ENCODE measurements at regions of chr4 and their contacts with region 1.

Region 1: DNA sequence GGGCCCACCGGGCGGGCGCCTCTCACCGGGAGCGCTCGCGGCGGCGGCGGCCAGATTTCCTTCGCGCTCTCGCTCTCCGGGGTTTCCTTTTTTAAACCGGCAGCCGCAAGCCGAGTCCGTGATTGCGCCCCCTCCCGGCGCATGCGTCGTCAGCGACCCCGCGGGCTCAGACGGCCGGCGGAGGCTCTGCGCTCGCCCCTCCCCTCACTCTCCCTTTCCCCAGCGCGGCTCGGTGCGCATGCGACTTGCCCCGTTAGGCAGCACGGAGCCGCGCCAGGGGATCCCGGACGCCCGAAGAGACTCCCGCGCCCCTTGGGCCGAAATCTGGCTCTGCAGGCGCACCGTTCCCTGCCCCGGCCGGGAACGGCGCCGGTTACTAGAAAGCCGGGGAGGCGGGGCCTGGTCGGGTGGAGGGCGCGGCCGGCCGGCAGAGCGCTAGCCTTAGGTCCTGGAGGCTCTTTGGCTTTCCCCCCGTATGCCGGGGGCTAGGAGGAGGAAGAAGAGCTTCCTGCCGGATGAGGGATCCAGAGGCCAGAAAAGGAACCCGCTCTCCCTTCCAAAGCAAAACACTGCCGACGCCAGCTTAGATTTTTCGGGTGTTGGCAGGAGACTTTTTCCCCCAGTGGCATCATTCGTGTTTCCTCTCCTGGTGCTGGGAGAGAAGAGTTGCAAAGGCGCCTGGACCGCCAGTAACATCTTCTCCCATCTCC is at the start of gene CLOCK:
- DNase-seq: peak; percentile 89 to 91 (median 90)
- ATAC-seq: peak; percentile 81
- H3K4me3 ChIP-seq: peak within 1 kb of the TSS; percentile 50
- H3K27ac ChIP-seq: peak within 1 kb of the TSS; percentile 91
- H3K4me1 ChIP-seq: peaks cover 9 to 27% of the 10 kb centered on the region in 2 experiments; a peak in 4 of 5 replicates
- H3K27me3 ChIP-seq: no peaks in the 10 kb centered on the region
- CTCF ChIP-seq: peak; percentile 52 to 65 (median 54); a peak in 5 of 6 replicates
- EP300 ChIP-seq: no peak
- POLR2A ChIP-seq: peak; percentile 72
- RAD21 ChIP-seq: no peak; a peak in 2 of 4 replicates
- polyA plus RNA-seq, gene CLOCK: 3.7 to 4.5 TPM

Region 2: GRCh38 chr4:55184600-55185523 is 362.0 kb before region 1 on chr4:
- CTCF ChIA-PET with region 1: no interaction called
- POLR2A ChIA-PET with region 1: no interaction called
- in situ Hi-C with region 1: no loop called
- intact Hi-C with region 1: loop called (anchors 10 kb)
- DNase-seq: peak; percentile 31 to 62 (median 38)
- ATAC-seq: peak; percentile 93
- H3K4me3 ChIP-seq: no peak overlapping the region
- H3K27ac ChIP-seq: no peak overlapping the region
- H3K4me1 ChIP-seq: no peaks in the 10 kb centered on the region
- H3K27me3 ChIP-seq: no peaks in the 10 kb centered on the region; a peak in 1 of 5 replicates
- CTCF ChIP-seq: peak; percentile 57 to 77 (median 66)
- EP300 ChIP-seq: no peak
- POLR2A ChIP-seq: no peak
- RAD21 ChIP-seq: peak; percentile 61

Region 3: DNA sequence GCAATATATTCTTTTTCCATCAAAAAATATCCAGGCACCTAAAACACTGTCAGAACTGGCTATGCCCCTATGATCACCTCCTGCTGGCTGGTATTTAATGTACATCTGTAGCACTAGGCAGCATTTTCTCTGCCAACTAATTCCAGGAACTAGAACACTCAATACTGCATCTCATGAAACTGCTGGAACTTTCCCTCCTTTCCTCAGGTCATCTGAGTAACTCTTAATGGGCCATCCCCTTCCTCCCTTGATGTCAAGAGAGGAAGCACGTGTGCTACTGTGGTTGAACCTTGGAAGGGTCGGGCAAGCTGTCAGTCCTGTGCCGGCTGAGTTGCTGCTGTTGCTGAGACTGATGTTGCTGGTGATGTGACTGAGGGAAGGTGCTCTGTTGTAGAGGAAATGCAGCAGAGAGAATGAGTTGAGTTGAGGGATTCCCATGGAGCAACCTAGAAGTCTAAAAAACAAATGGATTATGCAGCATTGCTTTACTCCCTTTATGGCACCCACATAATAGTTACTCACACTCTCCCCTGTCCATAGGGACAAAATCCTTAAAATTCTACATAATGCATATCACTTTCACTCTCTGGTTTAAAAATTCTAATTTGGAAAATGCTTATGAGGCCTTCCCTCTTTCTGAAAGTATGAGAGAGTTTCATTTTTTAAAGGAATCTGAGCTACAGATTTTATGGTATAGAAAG is 111.6 kb before region 1 on chr4:
- CTCF ChIA-PET with region 1: no interaction called
- POLR2A ChIA-PET with region 1: no interaction called
- in situ Hi-C with region 1: no loop called
- intact Hi-C with region 1: loop called (anchors 5 kb)
- DNase-seq: peak in 1 of 4 experiments; percentile 13
- ATAC-seq: peak; percentile 41
- H3K4me3 ChIP-seq: no peak overlapping the region
- H3K27ac ChIP-seq: no peak overlapping the region
- H3K4me1 ChIP-seq: peaks cover 9 to 10% of the 10 kb centered on the region in 2 experiments; a peak in 4 of 5 replicates
- H3K27me3 ChIP-seq: no peaks in the 10 kb centered on the region
- CTCF ChIP-seq: peak in 2 of 3 experiments; percentile 11 to 29; a peak in 1 of 6 replicates
- EP300 ChIP-seq: no peak
- POLR2A ChIP-seq: no peak
- RAD21 ChIP-seq: no peak

Region 4: DNA sequence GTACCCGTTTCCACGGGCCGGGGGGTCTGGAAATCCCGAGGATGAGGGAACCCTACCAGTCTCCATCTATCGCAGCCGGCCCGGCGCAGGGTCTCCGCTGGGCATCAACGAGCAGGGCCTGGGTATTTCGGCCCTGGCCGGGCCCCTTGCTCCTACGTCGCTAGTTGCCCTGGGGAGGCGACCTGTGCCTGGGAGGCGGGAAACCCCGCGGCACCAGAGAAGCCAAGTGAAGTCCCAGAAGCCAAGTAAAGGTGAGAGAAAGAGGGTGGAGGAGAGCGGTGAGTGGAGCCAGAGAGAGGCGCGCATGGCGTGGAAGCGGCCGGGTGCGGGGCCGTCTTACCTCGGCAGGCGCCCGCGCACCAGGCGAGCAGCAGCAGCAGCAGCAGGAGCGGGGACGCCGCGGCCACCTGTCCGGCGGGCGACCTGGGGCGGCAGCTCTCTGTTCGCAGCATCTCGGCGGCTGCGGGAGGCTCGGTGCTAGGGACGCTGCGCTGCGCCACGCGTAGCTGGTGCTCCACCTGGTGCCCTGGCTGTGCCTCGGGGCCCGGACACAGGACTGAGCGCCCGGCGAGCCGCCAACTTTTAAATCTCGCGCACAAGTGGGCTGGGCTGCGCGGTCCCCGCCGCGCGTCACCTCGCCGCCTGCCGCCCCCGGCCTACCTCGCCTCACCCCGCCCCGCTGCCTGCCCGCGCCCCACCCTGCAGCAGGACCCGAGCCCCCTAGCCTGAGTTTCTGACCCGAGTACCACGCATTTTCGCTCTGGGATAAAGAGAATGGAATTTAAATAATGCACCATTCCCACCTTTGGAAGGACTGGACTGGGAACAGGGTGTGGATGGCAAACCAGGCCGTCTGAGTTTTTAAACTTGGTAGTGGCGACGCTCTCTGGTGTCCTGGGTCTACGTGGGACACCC is 89.1 kb after region 1 on chr4 and contains the start of gene NMU:
- CTCF ChIA-PET with region 1: no interaction called
- POLR2A ChIA-PET with region 1: interaction called, 4 read pairs
- in situ Hi-C with region 1: no loop called
- intact Hi-C with region 1: loop called (anchors 5 kb)
- DNase-seq: peak; percentile 63 to 89 (median 72)
- ATAC-seq: peak; percentile 80
- H3K4me3 ChIP-seq: peak within 1 kb of the TSS; percentile 90
- H3K27ac ChIP-seq: peak within 1 kb of the TSS; percentile 96
- H3K4me1 ChIP-seq: peaks cover 12 to 20% of the 10 kb centered on the region in 2 experiments
- H3K27me3 ChIP-seq: no peaks in the 10 kb centered on the region
- CTCF ChIP-seq: peak in 2 of 3 experiments; percentile 48 to 56; a peak in 3 of 6 replicates
- EP300 ChIP-seq: no peak
- POLR2A ChIP-seq: peak; percentile 76
- RAD21 ChIP-seq: peak; percentile 17 to 43; a peak in 3 of 4 replicates
- polyA plus RNA-seq, gene NMU: 73.8 to 122 TPM

Region 5: GRCh38 chr4:55729929-55730577 is 183.1 kb after region 1 on chr4:
- CTCF ChIA-PET with region 1: no interaction called
- POLR2A ChIA-PET with region 1: no interaction called
- in situ Hi-C with region 1: no loop called
- intact Hi-C with region 1: loop called (anchors 2 kb)
- DNase-seq: peak; percentile 68 to 96 (median 77)
- ATAC-seq: peak; percentile 92
- H3K4me3 ChIP-seq: peak overlapping the region; percentile 10; the same call in 1 of the 2 replicates
- H3K27ac ChIP-seq: peak overlapping the region; percentile 94
- H3K4me1 ChIP-seq: peaks cover 18 to 48% of the 10 kb centered on the region in 2 experiments
- H3K27me3 ChIP-seq: no peaks in the 10 kb centered on the region
- CTCF ChIP-seq: no peak
- EP300 ChIP-seq: peak; percentile 100
- POLR2A ChIP-seq: peak; percentile 53; the same call in 1 of the 2 replicates
- RAD21 ChIP-seq: peak in 1 of 2 experiments; percentile 20; a peak in 1 of 4 replicates

Region 6: GRCh38 chr4:55866973-55867574 is 320.2 kb after region 1 on chr4:
- CTCF ChIA-PET with region 1: no interaction called
- POLR2A ChIA-PET with region 1: no interaction called
- in situ Hi-C with region 1: no loop called
- intact Hi-C with region 1: loop called (anchors 5 kb)
- DNase-seq: peak; percentile 35 to 75 (median 42)
- ATAC-seq: peak; percentile 97
- H3K4me3 ChIP-seq: no peak overlapping the region
- H3K27ac ChIP-seq: peak overlapping the region; percentile 64; the same call in 2 of the 3 replicates
- H3K4me1 ChIP-seq: peaks cover 0 to 10% of the 10 kb centered on the region in 2 experiments; a peak in 2 of 5 replicates
- H3K27me3 ChIP-seq: no peaks in the 10 kb centered on the region
- CTCF ChIP-seq: peak; percentile 65 to 89 (median 77)
- EP300 ChIP-seq: no peak
- POLR2A ChIP-seq: no peak
- RAD21 ChIP-seq: peak; percentile 77 to 80

Region 7: GRCh38 chr4:56164907-56165306 is 618.0 kb after region 1 on chr4:
- CTCF ChIA-PET with region 1: no interaction called
- POLR2A ChIA-PET with region 1: no interaction called
- in situ Hi-C with region 1: no loop called
- intact Hi-C with region 1: no loop called
- DNase-seq: no peak
- ATAC-seq: no peak
- H3K4me3 ChIP-seq: no peak overlapping the region
- H3K27ac ChIP-seq: no peak overlapping the region
- H3K4me1 ChIP-seq: no peaks in the 10 kb centered on the region
- H3K27me3 ChIP-seq: peaks cover 5 to 8% of the 10 kb centered on the region in 2 experiments
- CTCF ChIP-seq: no peak
- EP300 ChIP-seq: no peak
- POLR2A ChIP-seq: no peak
- RAD21 ChIP-seq: no peak

Region 8: GRCh38 chr4:56424697-56425514 is 878.0 kb after region 1 on chr4:
- CTCF ChIA-PET with region 1: no interaction called
- POLR2A ChIA-PET with region 1: no interaction called
- in situ Hi-C with region 1: no loop called
- intact Hi-C with region 1: no loop called
- DNase-seq: peak; percentile 20 to 51 (median 35)
- ATAC-seq: peak; percentile 75
- H3K4me3 ChIP-seq: no peak overlapping the region
- H3K27ac ChIP-seq: no peak overlapping the region
- H3K4me1 ChIP-seq: peaks cover 0 to 9% of the 10 kb centered on the region in 2 experiments; a peak in 3 of 5 replicates
- H3K27me3 ChIP-seq: no peaks in the 10 kb centered on the region
- CTCF ChIP-seq: peak; percentile 31 to 67 (median 54); a peak in 5 of 6 replicates
- EP300 ChIP-seq: no peak
- POLR2A ChIP-seq: no peak
- RAD21 ChIP-seq: peak; percentile 48 to 54